Mammary epithelial cell (primary cell): ENCODE measurements at regions of chr1 and their contacts with region 1.

Region 1: GRCh38 chr1:152855661-152856060 is 4.1 kb upstream of the LCE7A start:
- DNase-seq: peak; percentile 42
- H3K4me3 ChIP-seq: no peak overlapping the region
- H3K27ac ChIP-seq: no peak overlapping the region
- H3K4me1 ChIP-seq: peaks cover 25% of the 10 kb centered on the region
- H3K27me3 ChIP-seq: no peaks in the 10 kb centered on the region
- CTCF ChIP-seq: no peak

Region 2: DNA sequence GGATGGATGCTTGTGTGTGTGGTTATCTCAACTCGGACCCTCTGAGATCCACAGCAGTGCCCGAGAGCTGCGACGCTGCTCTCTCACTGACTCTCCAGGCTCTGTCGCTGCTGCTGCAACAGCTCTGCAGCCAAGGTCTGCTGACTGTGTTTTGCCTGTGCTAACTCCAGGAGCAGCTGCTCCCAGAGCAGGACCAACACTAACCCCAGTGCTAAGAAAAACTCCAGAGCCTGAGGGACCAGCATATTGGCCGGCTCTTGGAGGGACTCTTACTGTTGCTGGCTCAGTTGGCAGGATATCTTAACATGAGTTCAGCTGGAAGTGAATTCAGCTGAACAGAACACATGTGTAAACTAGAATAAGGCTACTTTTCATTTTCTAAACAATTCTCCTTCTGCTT is 176.2 kb before region 1 on chr1:
- CTCF ChIA-PET with region 1: no interaction called
- dilution Hi-C with region 1: no loop called
- in situ Hi-C with region 1: no loop called
- intact Hi-C with region 1: loop called (anchors 10 kb)
- DNase-seq: no peak
- H3K4me3 ChIP-seq: no peak overlapping the region
- H3K27ac ChIP-seq: no peak overlapping the region
- H3K4me1 ChIP-seq: no peaks in the 10 kb centered on the region
- H3K27me3 ChIP-seq: peaks cover 10% of the 10 kb centered on the region
- CTCF ChIP-seq: no peak